ENCODE measurements at regions of chr2 and their contacts with region 1.

Region 1: DNA sequence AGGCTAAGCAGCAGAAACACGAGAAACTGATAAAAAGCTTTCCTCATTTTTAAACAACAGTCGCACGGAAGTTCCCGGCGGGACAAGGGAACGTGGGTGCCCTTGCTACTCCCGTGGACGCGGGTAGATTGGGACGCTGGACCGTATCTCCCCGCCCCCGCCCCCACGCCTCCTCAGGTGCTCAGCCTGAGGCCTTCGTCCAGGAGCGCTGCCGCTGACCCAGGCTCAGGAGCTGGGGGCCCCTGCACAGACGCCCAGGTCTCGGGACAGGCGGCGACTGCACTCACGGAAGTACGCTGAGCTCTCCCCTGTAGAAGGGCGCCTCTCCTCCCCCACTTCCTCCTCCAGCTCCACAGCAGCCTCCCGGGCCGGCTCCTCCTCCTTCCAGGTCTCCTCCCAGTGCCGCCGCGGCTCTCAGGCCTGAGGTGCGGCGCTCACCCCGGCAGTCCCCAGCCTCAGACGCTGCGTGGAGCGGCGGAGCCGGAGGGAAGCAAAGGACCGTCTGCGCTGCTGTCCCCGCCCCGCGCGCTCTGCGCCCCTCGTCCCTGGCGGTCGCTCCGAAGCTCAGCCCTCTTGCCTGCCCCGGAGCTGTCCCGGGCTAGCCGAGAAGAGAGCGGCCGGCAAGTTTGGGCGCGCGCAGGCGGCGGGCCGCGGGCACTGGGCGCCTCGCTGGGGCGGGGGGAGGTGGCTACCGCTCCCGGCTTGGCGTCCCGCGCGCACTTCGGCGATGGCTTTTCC is at the start of gene ITGAV:
- DNase-seq: peak; percentile 96
- ATAC-seq: peak; percentile 96 to 99
- total RNA-seq, gene ITGAV: 83.3 to 140 TPM

Region 2: GRCh38 chr2:186523791-186524190 is 66.0 kb before region 1 on chr2:
- intact Hi-C with region 1: loop called in 1 of 2 experiments (anchors 10 kb)
- DNase-seq: no peak
- ATAC-seq: no peak

Measured in left cardiac atrium (tissue), 4 donors.